Transverse colon (tissue), 4 donors: ENCODE measurements at regions of chr4 and their contacts with region 1.

Region 1: DNA sequence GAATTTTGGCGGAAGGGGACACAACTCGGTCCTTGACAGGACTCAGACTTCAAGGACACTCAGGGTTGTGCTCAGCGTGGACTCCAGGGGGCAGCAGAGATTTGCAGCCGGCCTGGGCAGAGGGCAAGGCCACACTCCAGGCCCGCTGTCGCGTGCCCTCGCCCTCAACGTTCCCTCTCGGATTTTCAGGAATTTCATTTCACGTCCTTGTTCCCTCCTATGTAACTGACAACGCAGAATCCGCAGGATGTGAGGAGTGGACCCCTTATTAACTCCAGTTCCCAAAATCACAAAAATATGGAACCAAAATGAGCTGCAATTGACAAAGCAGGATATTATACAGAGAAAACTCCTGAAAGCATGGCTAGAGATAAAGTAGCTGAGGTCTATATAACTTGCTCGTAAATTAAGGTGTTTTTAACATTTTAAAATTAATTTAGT is 21.0 kb upstream of the DCTD start:
- DNase-seq: peak; percentile 78
- H3K4me3 ChIP-seq: no peak overlapping the region
- H3K27ac ChIP-seq: no peak overlapping the region
- H3K4me1 ChIP-seq: peaks cover 0 to 3% (median 0%) of the 10 kb centered on the region in 4 donors
- H3K27me3 ChIP-seq: peaks cover 5% of the 10 kb centered on the region
- CTCF ChIP-seq: peak; percentile 81 to 93 (median 86)
- EP300 ChIP-seq: no peak
- POLR2A ChIP-seq: no peak

Region 2: GRCh38 chr4:183074296-183074990 is 136.2 kb after region 1 on chr4:
- in situ Hi-C with region 1: loop called in 1 of 4 experiments (anchors 10 kb)
- intact Hi-C with region 1: loop called (anchors 10 kb)
- DNase-seq: no peak
- H3K4me3 ChIP-seq: no peak overlapping the region
- H3K27ac ChIP-seq: no peak overlapping the region
- H3K4me1 ChIP-seq: no peaks in the 10 kb centered on the region
- H3K27me3 ChIP-seq: no peaks in the 10 kb centered on the region
- CTCF ChIP-seq: no peak
- EP300 ChIP-seq: no peak
- POLR2A ChIP-seq: no peak

Region 3: DNA sequence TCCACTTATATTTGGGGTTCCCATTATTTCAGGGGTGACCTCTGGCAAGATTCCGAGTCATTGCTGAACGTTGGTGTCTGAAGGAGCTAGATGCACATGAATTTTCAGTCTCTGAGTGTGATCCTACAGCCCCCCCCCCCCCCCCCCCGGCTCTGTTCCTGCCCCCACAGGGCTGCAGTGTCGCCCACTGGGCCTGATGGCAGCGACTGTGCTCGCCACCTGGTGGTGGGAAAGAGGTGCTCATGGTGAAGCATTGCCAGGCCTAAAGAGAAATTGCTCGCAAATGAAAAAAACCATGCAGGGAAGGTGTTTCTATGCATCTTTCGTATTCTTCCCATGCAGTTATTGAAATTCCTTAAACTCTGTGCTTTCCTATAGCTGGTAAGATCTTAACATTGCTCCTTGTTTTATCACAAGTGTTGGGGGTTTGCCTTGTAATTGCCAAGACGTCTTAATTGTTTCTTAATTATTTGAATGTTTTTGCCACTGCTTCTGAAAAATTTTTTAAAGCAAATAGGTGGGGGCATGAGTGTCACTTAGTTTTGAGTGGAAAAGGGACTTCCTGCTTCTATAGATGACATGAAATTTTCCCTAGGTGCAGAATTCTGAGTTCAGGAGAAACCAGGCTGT is 318.6 kb after region 1 on chr4:
- in situ Hi-C with region 1: loop called (anchors 10 kb)
- intact Hi-C with region 1: no loop called
- DNase-seq: peak; percentile 38
- H3K4me3 ChIP-seq: no peak overlapping the region
- H3K27ac ChIP-seq: peak overlapping the region in 1 of 4 donors; percentile 4
- H3K4me1 ChIP-seq: peaks cover 0 to 43% (median 11%) of the 10 kb centered on the region in 4 donors
- H3K27me3 ChIP-seq: no peaks in the 10 kb centered on the region
- CTCF ChIP-seq: peak; percentile 41 to 77 (median 66)
- EP300 ChIP-seq: no peak
- POLR2A ChIP-seq: no peak

Region 4: DNA sequence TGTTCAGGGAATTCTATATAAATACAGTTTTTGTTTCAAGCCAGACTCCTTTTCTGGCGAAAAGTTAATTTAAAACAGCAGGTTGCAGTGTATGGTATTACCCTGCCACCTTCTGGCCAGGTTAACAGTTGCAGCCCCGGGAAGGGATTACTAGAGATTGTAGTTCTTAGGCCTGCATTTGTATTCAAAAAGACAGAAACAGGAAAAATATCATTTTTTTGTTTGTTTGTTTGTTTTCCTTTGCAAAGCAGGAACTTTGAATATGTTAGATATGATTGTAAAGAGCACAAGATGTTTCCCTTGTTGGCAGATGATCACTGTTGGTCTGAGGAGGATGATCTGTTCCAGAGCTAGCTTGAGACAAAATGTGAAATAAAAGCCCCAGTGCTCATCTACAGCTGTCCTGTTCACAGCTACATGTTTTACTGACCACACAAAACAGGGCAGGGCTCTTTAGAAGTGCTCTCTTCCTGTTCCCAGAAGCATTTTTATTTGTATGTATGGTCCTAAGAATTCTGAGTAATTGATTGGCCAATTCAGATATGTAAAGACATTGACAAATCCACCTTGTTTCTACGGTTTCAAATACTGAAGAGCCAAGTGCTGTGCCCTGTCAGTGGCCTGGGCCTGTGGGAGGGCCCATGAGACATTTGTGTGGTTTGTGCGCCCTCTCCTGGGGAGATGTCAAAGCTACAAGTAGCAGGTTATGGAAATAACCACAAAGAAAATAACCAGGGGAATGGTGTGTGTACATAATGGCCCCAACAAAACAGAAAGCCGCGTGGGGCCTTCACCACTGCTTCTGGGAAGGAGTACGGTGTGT is 323.9 kb after region 1 on chr4:
- in situ Hi-C with region 1: loop called (anchors 10 kb)
- intact Hi-C with region 1: loop called (anchors 2 kb)
- DNase-seq: peak; percentile 88
- H3K4me3 ChIP-seq: no peak overlapping the region
- H3K27ac ChIP-seq: peak overlapping the region; percentile 45 to 72 (median 56)
- H3K4me1 ChIP-seq: peaks cover 7 to 21% (median 12%) of the 10 kb centered on the region in 4 donors
- H3K27me3 ChIP-seq: no peaks in the 10 kb centered on the region
- CTCF ChIP-seq: peak; percentile 71 to 82 (median 76)
- EP300 ChIP-seq: no peak
- POLR2A ChIP-seq: no peak

Region 5: DNA sequence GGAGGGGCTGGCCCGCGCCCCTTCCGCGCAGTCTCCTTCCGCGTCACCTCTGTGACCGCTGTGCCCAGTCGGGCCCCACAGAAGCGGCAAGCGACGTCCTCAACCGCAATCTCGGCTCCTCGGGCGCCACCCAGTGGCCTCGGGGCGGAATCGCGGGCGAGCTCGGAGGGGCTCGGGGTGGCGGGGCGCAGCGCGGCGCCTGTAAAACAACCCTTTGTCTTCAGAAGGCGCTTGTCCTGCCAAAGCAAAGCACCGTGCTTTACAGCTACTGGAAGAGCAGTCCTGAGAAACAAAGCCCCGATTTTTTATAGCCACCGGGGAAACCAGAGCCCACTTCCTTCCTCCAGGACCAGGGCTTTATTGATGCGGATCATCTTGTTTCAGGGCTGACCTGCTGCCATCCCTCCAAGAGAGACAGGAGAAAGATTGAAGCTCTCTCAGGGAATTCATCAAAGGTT is 468.9 kb after region 1 on chr4:
- in situ Hi-C with region 1: loop called in 1 of 4 experiments (anchors 25 kb)
- intact Hi-C with region 1: loop called (anchors 10 kb)
- DNase-seq: peak; percentile 89
- H3K4me3 ChIP-seq: peak overlapping the region; percentile 38 to 54 (median 46)
- H3K27ac ChIP-seq: peak overlapping the region; percentile 56 to 77 (median 68)
- H3K4me1 ChIP-seq: peaks cover 0 to 14% (median 9%) of the 10 kb centered on the region in 4 donors
- H3K27me3 ChIP-seq: no peaks in the 10 kb centered on the region
- CTCF ChIP-seq: peak; percentile 90 to 98 (median 96)
- EP300 ChIP-seq: no peak
- POLR2A ChIP-seq: peak; percentile 12